ENCODE measurements at regions of chr2 and their contacts with region 1.

Region 1: DNA sequence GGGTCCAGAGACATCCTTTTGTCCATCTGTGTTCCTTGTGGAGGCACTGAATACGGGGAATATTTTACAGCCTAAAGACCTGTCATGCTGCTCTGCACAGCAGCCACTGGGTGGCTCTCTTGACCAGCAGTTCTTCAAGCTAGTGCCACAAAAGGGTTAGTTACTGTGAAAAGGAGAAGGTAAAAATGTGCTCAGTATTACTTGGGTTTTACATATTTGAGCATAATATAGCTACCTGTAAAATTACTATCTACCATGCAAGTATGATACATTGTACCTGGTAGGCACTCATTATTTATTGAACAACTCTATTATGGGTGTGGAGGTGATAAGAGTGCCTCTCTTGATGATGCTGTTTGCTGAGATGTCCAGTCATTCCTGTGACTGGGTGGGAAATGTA is 23.6 kb downstream of the FZD5 start:
- DNase-seq: peak; percentile 72
- ATAC-seq: peak; percentile 73
- H3K4me3 ChIP-seq: no peak overlapping the region
- H3K4me3 Mint-ChIP-seq: no peak overlapping the region
- H3K27ac ChIP-seq: no peak overlapping the region
- H3K27ac Mint-ChIP-seq: no peak overlapping the region
- H3K4me1 ChIP-seq: no peaks in the 10 kb centered on the region
- H3K4me1 Mint-ChIP-seq: peaks cover 3% of the 10 kb centered on the region
- H3K27me3 ChIP-seq: no peaks in the 10 kb centered on the region
- H3K27me3 Mint-ChIP-seq: no peaks in the 10 kb centered on the region
- CTCF ChIP-seq: peak; percentile 80

Region 2: GRCh38 chr2:207769597-207770486 is 23.7 kb after region 1 on chr2 and contains the start of gene FZD5:
- CTCF ChIA-PET with region 1: interaction called, 15 read pairs
- POLR2A ChIA-PET with region 1: no interaction called
- intact Hi-C with region 1: loop called (anchors 2 kb)
- DNase-seq: peak; percentile 89
- ATAC-seq: peak; percentile 88
- H3K4me3 ChIP-seq: peak within 1 kb of the TSS; percentile 55 to 87 (median 65)
- H3K4me3 Mint-ChIP-seq: peak within 1 kb of the TSS; percentile 89
- H3K27ac ChIP-seq: no peak within 1 kb of the TSS
- H3K27ac Mint-ChIP-seq: peak within 1 kb of the TSS; percentile 80
- H3K4me1 ChIP-seq: peaks cover 32 to 44% of the 10 kb centered on the region in 2 donors
- H3K4me1 Mint-ChIP-seq: peaks cover 36% of the 10 kb centered on the region
- H3K27me3 ChIP-seq: peaks cover 0 to 15% (median 4%) of the 10 kb centered on the region in 4 experiments
- H3K27me3 Mint-ChIP-seq: peaks cover 6% of the 10 kb centered on the region
- CTCF ChIP-seq: peak; percentile 33
- total RNA-seq, gene FZD5: 1.8 and 2.5 TPM in 2 replicates

Region 3: GRCh38 chr2:208033758-208034502 is 287.8 kb after region 1 on chr2:
- CTCF ChIA-PET with region 1: interaction called, 168 read pairs
- POLR2A ChIA-PET with region 1: no interaction called
- intact Hi-C with region 1: loop called (anchors 1 kb)
- DNase-seq: peak; percentile 60
- ATAC-seq: peak; percentile 68
- H3K4me3 ChIP-seq: no peak overlapping the region
- H3K4me3 Mint-ChIP-seq: no peak overlapping the region
- H3K27ac ChIP-seq: no peak overlapping the region
- H3K27ac Mint-ChIP-seq: no peak overlapping the region
- H3K4me1 ChIP-seq: no peaks in the 10 kb centered on the region
- H3K4me1 Mint-ChIP-seq: no peaks in the 10 kb centered on the region
- H3K27me3 ChIP-seq: no peaks in the 10 kb centered on the region
- H3K27me3 Mint-ChIP-seq: no peaks in the 10 kb centered on the region
- CTCF ChIP-seq: peak; percentile 55

Region 4: GRCh38 chr2:208062113-208062512 is 316.0 kb after region 1 on chr2:
- CTCF ChIA-PET with region 1: interaction called, 9 read pairs
- POLR2A ChIA-PET with region 1: no interaction called
- intact Hi-C with region 1: loop called (anchors 1 kb)
- DNase-seq: peak; percentile 31
- ATAC-seq: no peak
- H3K4me3 ChIP-seq: no peak overlapping the region
- H3K4me3 Mint-ChIP-seq: no peak overlapping the region
- H3K27ac ChIP-seq: no peak overlapping the region
- H3K27ac Mint-ChIP-seq: no peak overlapping the region
- H3K4me1 ChIP-seq: no peaks in the 10 kb centered on the region
- H3K4me1 Mint-ChIP-seq: peaks cover 6% of the 10 kb centered on the region
- H3K27me3 ChIP-seq: no peaks in the 10 kb centered on the region
- H3K27me3 Mint-ChIP-seq: peaks cover 12% of the 10 kb centered on the region
- CTCF ChIP-seq: peak; percentile 22

Region 5: GRCh38 chr2:208254871-208255556 is 508.9 kb after region 1 on chr2 and contains the start of gene IDH1:
- CTCF ChIA-PET with region 1: interaction called, 3 read pairs
- POLR2A ChIA-PET with region 1: no interaction called
- intact Hi-C with region 1: loop called (anchors 10 kb)
- DNase-seq: peak; percentile 94
- ATAC-seq: peak; percentile 80
- H3K4me3 ChIP-seq: peak within 1 kb of the TSS; percentile 83 to 99 (median 93)
- H3K4me3 Mint-ChIP-seq: peak within 1 kb of the TSS; percentile 99
- H3K27ac ChIP-seq: peak within 1 kb of the TSS; percentile 47 to 65
- H3K27ac Mint-ChIP-seq: peak within 1 kb of the TSS; percentile 86
- H3K4me1 ChIP-seq: peaks cover 30 to 41% of the 10 kb centered on the region in 2 donors
- H3K4me1 Mint-ChIP-seq: peaks cover 52% of the 10 kb centered on the region
- H3K27me3 ChIP-seq: no peaks in the 10 kb centered on the region
- H3K27me3 Mint-ChIP-seq: no peaks in the 10 kb centered on the region
- CTCF ChIP-seq: peak; percentile 33
- total RNA-seq, gene IDH1: 41.4 TPM in 2 replicates

Measured in B cell (primary cell).